Mammary epithelial cell (primary cell): ENCODE measurements at regions of chr18 and their contacts with region 1.

Region 1: DNA sequence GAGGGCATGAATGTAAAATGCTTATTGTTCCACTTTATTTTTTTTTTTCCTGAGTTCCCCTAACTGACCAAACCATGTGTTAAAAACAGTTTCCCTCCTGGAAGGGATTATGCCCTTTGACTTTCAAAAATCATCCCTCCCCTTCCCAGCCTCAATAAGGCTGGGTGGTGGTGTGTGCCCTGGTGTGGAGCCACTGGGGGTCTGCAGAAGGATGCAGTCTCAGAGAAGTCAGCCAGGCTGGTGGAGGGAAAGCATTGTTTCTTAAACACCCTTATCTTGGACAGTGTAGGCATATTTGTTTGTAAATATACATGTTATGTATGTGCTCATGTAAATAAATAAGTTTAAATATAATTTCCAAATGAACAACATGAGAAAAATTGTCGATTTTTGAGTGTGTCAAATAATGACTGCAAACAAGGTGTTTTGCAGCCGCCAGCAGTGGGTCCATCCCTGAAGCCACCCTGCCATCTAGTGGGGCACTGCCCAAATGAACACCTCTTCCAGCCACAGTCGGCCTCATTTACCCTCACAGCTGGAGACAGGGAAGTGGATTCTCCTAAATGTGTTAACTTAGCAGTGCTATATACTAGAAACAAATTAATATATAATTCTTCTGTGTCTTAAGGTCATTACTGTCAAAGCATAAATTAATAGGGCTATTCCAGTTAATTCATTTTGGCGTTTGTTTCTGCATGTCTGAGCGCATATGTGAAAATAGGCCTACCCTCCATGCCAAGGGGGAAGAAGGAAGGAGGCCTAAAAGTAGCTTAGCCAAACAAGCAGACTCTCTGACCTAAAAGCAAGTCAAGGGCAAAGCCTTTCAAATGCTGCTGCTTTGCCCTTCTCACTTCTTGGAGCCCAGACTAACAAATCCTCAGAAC is 209.6 kb upstream of the PIK3C3 start:
- DNase-seq: peak; percentile 28
- H3K4me3 ChIP-seq: no peak overlapping the region
- H3K27ac ChIP-seq: no peak overlapping the region
- H3K4me1 ChIP-seq: no peaks in the 10 kb centered on the region
- H3K27me3 ChIP-seq: no peaks in the 10 kb centered on the region
- CTCF ChIP-seq: peak; percentile 64 to 87

Region 2: DNA sequence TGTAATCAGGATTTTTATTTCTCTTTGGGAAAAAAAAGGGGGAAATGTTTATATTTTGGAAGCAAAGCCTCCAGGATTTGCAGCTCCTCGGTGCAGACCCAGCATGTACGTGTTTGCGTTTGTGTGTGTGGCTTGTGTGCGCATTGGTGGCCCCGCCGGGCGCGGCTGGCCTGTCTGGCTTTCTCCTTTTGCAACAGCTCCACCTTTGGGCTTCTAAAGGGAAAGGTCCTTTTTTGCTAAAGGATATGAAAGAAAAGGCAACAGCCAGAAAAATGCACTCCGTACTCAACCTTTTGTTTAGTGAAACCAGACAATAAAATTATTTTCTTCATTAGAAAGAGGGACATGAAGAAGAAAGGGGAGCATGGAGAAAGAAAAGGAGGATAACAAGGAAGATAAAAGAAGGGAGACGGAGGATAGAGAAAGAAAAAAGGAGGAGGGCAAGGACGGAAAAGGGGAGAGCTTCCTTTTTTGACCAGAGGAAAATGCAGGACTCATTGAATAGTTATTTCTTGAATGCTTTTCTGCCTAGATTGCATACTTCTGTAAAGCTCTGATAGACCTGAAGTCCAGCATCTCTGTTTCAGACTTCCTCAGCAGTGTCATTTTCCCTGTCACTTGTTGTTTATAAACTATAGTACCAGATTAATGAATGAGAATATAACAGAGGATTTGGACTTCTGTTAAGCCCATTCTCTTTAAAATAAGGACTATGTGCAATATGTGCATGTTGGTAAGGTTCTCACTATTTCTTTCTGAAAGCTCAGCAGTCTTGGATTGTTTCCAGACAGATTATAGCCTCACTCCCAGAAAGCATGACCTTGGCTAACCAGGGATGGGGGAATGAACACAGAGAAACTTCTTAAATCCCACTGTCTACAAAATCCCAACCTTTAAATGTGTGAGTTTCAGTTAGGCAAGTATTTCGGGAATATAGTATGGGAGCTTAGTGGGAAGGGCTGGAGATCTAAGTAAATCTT is 353.5 kb before region 1 on chr18:
- CTCF ChIA-PET with region 1: no interaction called
- dilution Hi-C with region 1: no loop called
- in situ Hi-C with region 1: no loop called
- intact Hi-C with region 1: loop called (anchors 1 kb)
- DNase-seq: peak; percentile 34
- H3K4me3 ChIP-seq: peak overlapping the region; percentile 34 to 61 (median 45)
- H3K27ac ChIP-seq: no peak overlapping the region
- H3K4me1 ChIP-seq: peaks cover 5% of the 10 kb centered on the region
- H3K27me3 ChIP-seq: no peaks in the 10 kb centered on the region
- CTCF ChIP-seq: peak; percentile 61 to 83

Region 3: GRCh38 chr18:41406834-41407233 is 338.6 kb before region 1 on chr18:
- CTCF ChIA-PET with region 1: no interaction called
- dilution Hi-C with region 1: no loop called
- in situ Hi-C with region 1: loop called in 1 of 2 experiments (anchors 10 kb)
- intact Hi-C with region 1: no loop called
- DNase-seq: no peak
- H3K4me3 ChIP-seq: no peak overlapping the region
- H3K27ac ChIP-seq: no peak overlapping the region
- H3K4me1 ChIP-seq: no peaks in the 10 kb centered on the region
- H3K27me3 ChIP-seq: peaks cover 3% of the 10 kb centered on the region
- CTCF ChIP-seq: no peak

Region 4: DNA sequence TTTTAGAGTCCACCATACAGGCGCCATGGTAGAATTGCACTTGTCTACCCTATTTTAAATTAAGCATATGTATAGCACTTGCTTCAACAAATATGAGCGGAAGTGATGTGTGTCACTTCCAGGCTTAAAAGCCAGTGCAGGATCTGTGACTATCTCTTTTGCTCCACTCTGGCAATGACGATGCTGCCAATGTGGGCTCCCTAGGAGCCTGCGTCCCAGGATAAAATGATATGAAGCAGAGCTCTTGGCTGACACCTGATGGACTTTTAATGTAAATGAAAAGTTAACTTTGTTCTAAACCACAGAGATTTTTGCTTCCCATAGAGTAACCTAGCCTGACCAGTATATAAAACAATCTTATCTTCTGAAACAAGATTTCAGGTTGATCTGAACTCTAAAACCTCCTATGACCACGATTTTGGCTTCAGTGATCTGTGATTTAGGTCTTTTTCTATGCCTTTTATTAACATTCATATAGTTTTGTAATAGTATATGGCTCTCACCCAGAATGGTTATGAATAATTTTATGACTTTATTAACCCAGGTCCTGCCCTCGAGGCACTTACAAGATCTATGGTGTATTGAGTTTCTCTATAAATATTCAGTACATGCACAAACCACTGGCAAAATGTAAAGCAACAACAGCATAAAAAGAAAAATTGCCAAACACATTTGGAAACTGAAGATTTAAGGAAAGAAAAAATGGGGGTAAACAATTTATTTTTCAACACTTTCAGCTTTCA is 212.9 kb before region 1 on chr18:
- CTCF ChIA-PET with region 1: no interaction called
- dilution Hi-C with region 1: no loop called
- in situ Hi-C with region 1: no loop called
- intact Hi-C with region 1: loop called (anchors 5 kb)
- DNase-seq: no peak
- H3K4me3 ChIP-seq: no peak overlapping the region
- H3K27ac ChIP-seq: no peak overlapping the region
- H3K4me1 ChIP-seq: no peaks in the 10 kb centered on the region
- H3K27me3 ChIP-seq: no peaks in the 10 kb centered on the region
- CTCF ChIP-seq: peak; percentile 2 to 26

Region 5: GRCh38 chr18:41906528-41907146 is 161.2 kb after region 1 on chr18:
- CTCF ChIA-PET with region 1: no interaction called
- dilution Hi-C with region 1: no loop called
- in situ Hi-C with region 1: no loop called
- intact Hi-C with region 1: loop called (anchors 2 kb)
- DNase-seq: peak; percentile 35
- H3K4me3 ChIP-seq: no peak overlapping the region
- H3K27ac ChIP-seq: no peak overlapping the region
- H3K4me1 ChIP-seq: peaks cover 6% of the 10 kb centered on the region
- H3K27me3 ChIP-seq: no peaks in the 10 kb centered on the region
- CTCF ChIP-seq: peak; percentile 51 to 59